Activated naive CD4-positive, alpha-beta T cell treated with anti-CD3 and anti-CD28 coated beads for 36 hours (primary cell): ENCODE measurements at regions of chr10 and their contacts with region 1.

Region 1: GRCh38 chr10:123967396-123968243 is 76.0 kb upstream of the CPXM2 start:
- DNase-seq: peak; percentile 74
- H3K4me3 Mint-ChIP-seq: no peak overlapping the region
- H3K27ac Mint-ChIP-seq: no peak overlapping the region
- H3K4me1 Mint-ChIP-seq: no peaks in the 10 kb centered on the region
- H3K27me3 Mint-ChIP-seq: peaks cover 54% of the 10 kb centered on the region

Region 2: GRCh38 chr10:123043409-123043925 is 924.2 kb before region 1 on chr10:
- CTCF ChIA-PET with region 1: interaction called, 4 read pairs
- intact Hi-C with region 1: loop called (anchors 10 kb)
- DNase-seq: peak; percentile 60
- H3K4me3 Mint-ChIP-seq: no peak overlapping the region
- H3K27ac Mint-ChIP-seq: no peak overlapping the region
- H3K4me1 Mint-ChIP-seq: peaks cover 3% of the 10 kb centered on the region
- H3K27me3 Mint-ChIP-seq: no peaks in the 10 kb centered on the region

Region 3: GRCh38 chr10:123573236-123574108 is 394.1 kb before region 1 on chr10:
- CTCF ChIA-PET with region 1: interaction called, 10 read pairs
- intact Hi-C with region 1: no loop called
- DNase-seq: peak; percentile 55
- H3K4me3 Mint-ChIP-seq: no peak overlapping the region
- H3K27ac Mint-ChIP-seq: no peak overlapping the region
- H3K4me1 Mint-ChIP-seq: no peaks in the 10 kb centered on the region
- H3K27me3 Mint-ChIP-seq: peaks cover 32% of the 10 kb centered on the region

Region 4: DNA sequence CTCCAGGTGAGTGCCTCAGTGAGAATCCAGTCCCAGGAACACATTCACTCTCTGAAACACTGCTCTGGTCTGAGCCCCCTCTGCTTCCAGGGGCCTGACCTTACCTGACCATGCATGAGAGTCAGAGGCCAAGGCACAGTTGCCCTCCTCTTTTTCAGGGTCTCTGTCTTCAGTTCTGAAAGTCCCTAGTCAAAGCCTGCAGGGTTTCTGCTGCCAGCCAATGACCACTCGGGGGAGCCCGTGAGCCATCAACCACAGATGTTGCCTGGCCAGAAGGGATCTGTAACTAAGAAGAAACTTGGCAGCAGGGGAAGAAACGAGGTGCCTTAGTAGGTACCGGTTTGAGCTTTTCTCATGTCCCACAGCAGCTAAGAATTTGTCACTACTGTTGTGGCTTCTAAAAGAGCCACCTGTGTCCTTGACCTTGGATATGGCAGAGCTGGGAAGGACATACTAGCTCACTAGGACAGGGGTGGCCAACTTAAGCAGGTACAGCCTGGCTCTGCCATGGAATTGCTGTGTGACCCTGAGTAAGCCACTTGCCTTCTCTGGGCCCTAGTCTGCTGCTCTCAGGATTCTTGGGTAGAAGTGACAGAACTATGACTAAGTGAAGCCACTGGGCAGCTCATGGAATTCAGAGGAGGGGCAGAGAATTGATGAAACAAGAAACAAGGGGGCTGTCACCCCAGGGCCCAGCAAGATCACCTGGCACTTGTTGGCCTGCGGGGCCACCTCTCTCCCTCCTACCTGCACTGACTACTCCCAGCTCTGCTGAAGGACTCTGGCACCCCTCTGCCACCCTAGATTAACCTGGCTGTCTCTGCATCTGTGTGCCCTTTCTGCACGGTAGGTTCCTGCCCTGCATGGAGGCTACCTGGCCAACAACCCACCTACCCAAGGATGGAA is 385.3 kb before region 1 on chr10:
- CTCF ChIA-PET with region 1: interaction called, 11 read pairs
- intact Hi-C with region 1: loop called (anchors 1 kb)
- DNase-seq: peak; percentile 82
- H3K4me3 Mint-ChIP-seq: no peak overlapping the region
- H3K27ac Mint-ChIP-seq: no peak overlapping the region
- H3K4me1 Mint-ChIP-seq: no peaks in the 10 kb centered on the region
- H3K27me3 Mint-ChIP-seq: peaks cover 40% of the 10 kb centered on the region

Region 5: GRCh38 chr10:124077208-124077993 is 109.8 kb after region 1 on chr10:
- CTCF ChIA-PET with region 1: no interaction called
- intact Hi-C with region 1: no loop called
- DNase-seq: no peak
- H3K4me3 Mint-ChIP-seq: no peak overlapping the region
- H3K27ac Mint-ChIP-seq: no peak overlapping the region
- H3K4me1 Mint-ChIP-seq: peaks cover 9% of the 10 kb centered on the region
- H3K27me3 Mint-ChIP-seq: peaks cover 2% of the 10 kb centered on the region

Region 6: GRCh38 chr10:124315591-124316270 is 348.1 kb after region 1 on chr10:
- CTCF ChIA-PET with region 1: no interaction called
- intact Hi-C with region 1: no loop called
- DNase-seq: no peak
- H3K4me3 Mint-ChIP-seq: no peak overlapping the region
- H3K27ac Mint-ChIP-seq: no peak overlapping the region
- H3K4me1 Mint-ChIP-seq: no peaks in the 10 kb centered on the region
- H3K27me3 Mint-ChIP-seq: no peaks in the 10 kb centered on the region